Gastrocnemius medialis (tissue), 4 donors: ENCODE measurements at regions of chr5 and their contacts with region 1.

Region 1: DNA sequence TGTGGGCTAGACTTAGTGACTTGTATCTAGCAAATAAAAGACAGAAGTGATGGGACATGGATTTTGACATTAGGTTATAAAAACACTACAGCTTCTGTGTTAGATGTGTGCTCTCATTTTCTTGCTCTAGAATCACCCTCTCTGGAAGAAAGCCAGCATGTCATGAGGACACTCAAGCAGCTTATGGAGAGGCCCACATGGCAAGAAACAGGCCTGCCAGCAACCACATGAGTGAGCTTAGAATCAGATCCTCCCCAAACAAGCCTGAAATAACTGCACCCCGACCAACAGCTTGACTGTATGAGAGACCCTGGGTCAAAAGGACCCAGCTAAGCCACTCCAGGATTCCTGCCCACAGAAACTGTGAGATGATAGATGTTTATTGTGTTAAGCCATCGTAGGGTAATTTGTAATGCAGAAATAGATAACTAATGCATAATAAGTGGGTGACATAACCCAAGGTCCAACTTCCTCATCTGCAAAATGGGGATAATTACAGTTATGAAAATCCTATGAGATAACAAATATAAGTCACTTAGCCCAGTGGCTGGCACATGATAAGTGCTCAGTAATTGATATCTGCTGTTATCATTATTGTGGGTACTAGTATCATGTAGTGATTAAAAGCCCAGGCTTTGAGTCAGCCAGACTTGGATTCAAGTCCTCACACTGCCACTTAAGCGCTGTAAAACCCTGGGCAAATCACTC is 86.5 kb downstream of the KLHL3 start:
- DNase-seq: no peak
- ATAC-seq: no peak
- H3K4me3 ChIP-seq: no peak overlapping the region
- H3K27ac ChIP-seq: no peak overlapping the region
- H3K4me1 ChIP-seq: no peaks in the 10 kb centered on the region
- H3K27me3 ChIP-seq: no peaks in the 10 kb centered on the region
- CTCF ChIP-seq: no peak
- POLR2A ChIP-seq: no peak

Region 2: GRCh38 chr5:137498736-137499505 is 150.5 kb before region 1 on chr5 and contains the start of gene SPOCK1:
- in situ Hi-C with region 1: no loop called
- intact Hi-C with region 1: no loop called
- DNase-seq: peak in 1 of 2 donors; percentile 54
- ATAC-seq: peak; percentile 84 to 88
- H3K4me3 ChIP-seq: peak within 1 kb of the TSS; percentile 49 to 69 (median 62)
- H3K27ac ChIP-seq: peak within 1 kb of the TSS in 2 of 4 donors; percentile 57 to 75
- H3K4me1 ChIP-seq: no peaks in the 10 kb centered on the region
- H3K27me3 ChIP-seq: no peaks in the 10 kb centered on the region
- CTCF ChIP-seq: peak in 4 of 5 experiments; percentile 85 to 93 (median 89)
- POLR2A ChIP-seq: peak; percentile 65 to 83
- total RNA-seq, gene SPOCK1: 5.8 to 33.8 (median 25.3) TPM

Region 3: GRCh38 chr5:137735555-137736284 is 86.3 kb after region 1 on chr5 and contains the start of gene KLHL3:
- in situ Hi-C with region 1: loop called in 3 of 4 experiments (anchors 10 kb)
- intact Hi-C with region 1: no loop called
- DNase-seq: no peak
- ATAC-seq: peak in 1 of 2 donors; percentile 64
- H3K4me3 ChIP-seq: peak within 1 kb of the TSS; percentile 17 to 51 (median 40)
- H3K27ac ChIP-seq: peak within 1 kb of the TSS; percentile 30 to 56 (median 38)
- H3K4me1 ChIP-seq: peaks cover 9% of the 10 kb centered on the region in 2 donors
- H3K27me3 ChIP-seq: no peaks in the 10 kb centered on the region
- CTCF ChIP-seq: no peak
- POLR2A ChIP-seq: no peak
- total RNA-seq, gene KLHL3: 0.46 to 4.6 (median 1.7) TPM

Region 4: DNA sequence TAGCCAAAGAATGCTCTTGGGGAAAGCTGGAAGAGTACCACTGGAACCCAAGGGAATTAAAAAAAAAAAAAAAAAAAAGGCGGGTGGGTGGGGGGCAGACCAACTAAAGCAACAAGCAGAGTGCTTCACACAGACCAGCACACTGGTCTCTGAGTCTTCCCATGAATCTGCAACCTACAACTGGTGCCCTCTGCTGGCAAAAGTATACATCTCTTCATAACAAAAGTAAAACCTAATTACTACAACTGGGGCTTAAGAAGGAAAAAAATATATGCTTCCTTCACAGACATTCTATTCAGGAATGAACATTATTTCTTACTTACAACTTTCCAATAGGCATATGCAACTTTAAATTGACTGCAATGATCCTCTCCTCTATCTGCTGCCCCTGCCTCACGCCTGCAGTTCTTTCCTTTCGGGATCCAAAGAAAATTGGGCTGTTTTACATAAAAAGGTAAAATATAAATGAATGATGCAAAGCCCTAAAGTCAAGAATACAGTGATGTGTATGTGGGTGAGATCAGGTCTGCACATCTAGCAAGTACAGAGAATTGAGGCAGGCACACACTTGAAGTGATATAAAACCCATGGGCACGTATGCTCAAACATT is 93.8 kb after region 1 on chr5:
- in situ Hi-C with region 1: loop called in 3 of 4 experiments (anchors 10 kb)
- intact Hi-C with region 1: no loop called
- DNase-seq: peak in 1 of 2 donors; percentile 23
- ATAC-seq: peak; percentile 76 to 86
- H3K4me3 ChIP-seq: no peak overlapping the region
- H3K27ac ChIP-seq: no peak overlapping the region
- H3K4me1 ChIP-seq: peaks cover 3 to 4% of the 10 kb centered on the region in 2 donors
- H3K27me3 ChIP-seq: no peaks in the 10 kb centered on the region
- CTCF ChIP-seq: peak; percentile 41 to 70 (median 56)
- POLR2A ChIP-seq: no peak